Head of caudate nucleus (tissue), 42 donors: ENCODE measurements at regions of chr4 and their contacts with region 1.

Region 1: GRCh38 chr4:173370477-173371291 is at the start of gene SAP30:
- DNase-seq: peak; percentile 93 to 99 (median 97)

Region 2: DNA sequence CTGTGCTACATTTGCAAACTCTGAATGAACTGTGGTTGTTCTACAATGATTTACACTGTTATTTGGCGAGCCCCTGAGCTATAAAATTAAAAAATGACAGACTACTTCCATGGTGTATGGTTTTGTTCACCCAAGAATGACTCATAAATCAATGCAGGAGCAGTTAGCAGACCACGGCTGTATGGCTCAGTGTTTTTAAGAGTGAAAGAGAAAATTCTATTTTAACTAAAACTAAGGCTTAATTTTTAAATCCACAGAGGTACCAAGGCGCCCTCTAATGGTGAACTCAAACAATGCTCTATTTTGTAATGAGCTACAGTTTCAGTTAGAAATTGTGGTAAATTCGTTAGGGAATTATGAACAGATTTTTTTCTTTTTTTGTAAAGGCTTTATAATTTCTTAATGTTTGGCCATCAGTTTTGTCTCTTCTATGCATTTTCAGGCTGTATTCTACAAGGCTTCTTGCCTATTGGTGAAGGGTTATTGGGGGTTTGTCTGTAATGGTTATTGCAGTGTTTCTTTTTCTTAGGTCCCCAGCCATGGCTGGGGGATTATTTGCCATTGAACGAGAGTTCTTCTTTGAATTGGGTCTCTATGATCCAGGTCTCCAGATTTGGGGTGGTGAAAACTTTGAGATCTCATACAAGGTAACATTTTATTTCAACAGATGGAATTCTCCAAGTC is 69.0 kb before region 1 on chr4:
- intact Hi-C with region 1: no loop called
- DNase-seq: peak in 12 of 42 donors; percentile 27 to 64 (median 35)

Region 3: GRCh38 chr4:173334085-173334772 is 36.5 kb before region 1 on chr4 and contains the start of gene HMGB2:
- intact Hi-C with region 1: loop called (anchors 2 kb)
- DNase-seq: peak; percentile 98 to 100 (median 100)

Region 4: GRCh38 chr4:173398220-173398619 is 27.5 kb after region 1 on chr4:
- intact Hi-C with region 1: no loop called
- DNase-seq: no peak